ENCODE measurements at regions of chr14 and their contacts with region 1.

Region 1: GRCh38 chr14:91177073-91178034 is 63.5 kb downstream of the DGLUCY start:
- DNase-seq: peak in 1 of 10 donors; percentile 39
- H3K4me3 ChIP-seq: no peak overlapping the region
- H3K27ac ChIP-seq: peak overlapping the region in 2 of 59 donors; percentile 25 to 61
- H3K27me3 ChIP-seq: no peaks in the 10 kb centered on the region
- CTCF ChIP-seq: peak in 55 of 56 donors; percentile 36 to 80 (median 68)

Region 2: DNA sequence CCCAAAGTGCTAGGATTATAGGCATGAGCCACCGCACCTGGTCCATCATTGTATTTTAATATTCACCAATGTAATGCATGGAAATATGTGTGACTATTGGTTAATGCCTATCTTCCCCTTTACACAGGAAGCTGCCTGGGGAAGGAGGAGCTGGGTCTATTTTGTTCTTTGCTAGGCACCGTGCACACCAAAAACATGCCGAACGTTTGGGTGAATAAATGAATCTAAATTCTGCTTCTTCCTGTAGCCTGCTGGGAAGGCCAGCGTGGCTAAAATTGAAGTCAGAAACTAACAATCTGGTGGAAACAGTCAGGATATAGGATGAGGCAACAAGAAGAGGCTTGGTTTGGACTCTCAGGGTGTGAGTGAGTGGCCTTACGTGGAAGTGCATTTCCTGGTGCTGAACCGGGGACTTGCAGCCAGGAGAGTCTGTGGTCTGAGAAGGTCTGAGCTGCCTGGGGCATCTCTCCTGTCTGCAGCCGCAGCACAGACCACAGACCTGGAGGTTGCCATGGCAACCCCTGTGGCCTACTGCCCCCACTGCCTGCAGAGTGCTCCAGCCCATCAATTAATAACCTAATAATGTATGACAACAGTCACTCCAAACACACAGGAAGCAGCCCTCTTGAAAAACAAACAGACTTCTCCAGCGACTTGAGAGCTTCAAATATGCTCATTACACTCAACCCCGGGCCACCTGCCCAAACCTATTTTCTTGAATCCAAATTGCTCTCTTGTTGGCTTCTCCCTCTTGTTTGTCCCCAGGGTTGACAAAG is 72.7 kb after region 1 on chr14:
- intact Hi-C with region 1: no loop called
- DNase-seq: peak in 1 of 10 donors; percentile 76
- H3K4me3 ChIP-seq: no peak overlapping the region
- H3K27ac ChIP-seq: peak overlapping the region in 8 of 59 donors; percentile 0 to 84 (median 24)
- H3K27me3 ChIP-seq: no peaks in the 10 kb centered on the region
- CTCF ChIP-seq: no peak

Region 3: GRCh38 chr14:91286530-91286937 is 109.2 kb after region 1 on chr14:
- intact Hi-C with region 1: loop called (anchors 2 to 5 kb)
- DNase-seq: peak; percentile 26 to 87 (median 71)
- H3K4me3 ChIP-seq: no peak overlapping the region
- H3K27ac ChIP-seq: no peak overlapping the region
- H3K27me3 ChIP-seq: peaks cover 0 to 2% (median 0%) of the 10 kb centered on the region in 45 donors
- CTCF ChIP-seq: peak; percentile 73 to 97 (median 91)

Region 4: GRCh38 chr14:91292491-91292890 is 115.1 kb after region 1 on chr14:
- intact Hi-C with region 1: loop called (anchors 2 to 5 kb)
- DNase-seq: no peak
- H3K4me3 ChIP-seq: no peak overlapping the region
- H3K27ac ChIP-seq: no peak overlapping the region
- H3K27me3 ChIP-seq: no peaks in the 10 kb centered on the region
- CTCF ChIP-seq: no peak